ENCODE measurements at regions of chr19 and their contacts with region 1.

Region 1: GRCh38 chr19:6354098-6354674 is 7.1 kb upstream of the CLPP start:
- DNase-seq: peak; percentile 36
- ATAC-seq: no peak
- H3K4me3 ChIP-seq: no peak overlapping the region
- H3K27ac ChIP-seq: no peak overlapping the region
- H3K4me1 ChIP-seq: peaks cover 11% of the 10 kb centered on the region; the same call in 1 of the 2 replicates
- H3K27me3 ChIP-seq: no peaks in the 10 kb centered on the region
- CTCF ChIP-seq: peak; percentile 61

Region 2: GRCh38 chr19:6048808-6049405 is 305.3 kb before region 1 on chr19:
- CTCF ChIA-PET with region 1: no interaction called
- POLR2A ChIA-PET with region 1: no interaction called
- intact Hi-C with region 1: loop called (anchors 2 kb)
- DNase-seq: peak; percentile 93
- ATAC-seq: peak; percentile 98
- H3K4me3 ChIP-seq: peak overlapping the region; percentile 33
- H3K27ac ChIP-seq: no peak overlapping the region
- H3K4me1 ChIP-seq: peaks cover 9% of the 10 kb centered on the region
- H3K27me3 ChIP-seq: no peaks in the 10 kb centered on the region
- CTCF ChIP-seq: peak; percentile 91

Region 3: DNA sequence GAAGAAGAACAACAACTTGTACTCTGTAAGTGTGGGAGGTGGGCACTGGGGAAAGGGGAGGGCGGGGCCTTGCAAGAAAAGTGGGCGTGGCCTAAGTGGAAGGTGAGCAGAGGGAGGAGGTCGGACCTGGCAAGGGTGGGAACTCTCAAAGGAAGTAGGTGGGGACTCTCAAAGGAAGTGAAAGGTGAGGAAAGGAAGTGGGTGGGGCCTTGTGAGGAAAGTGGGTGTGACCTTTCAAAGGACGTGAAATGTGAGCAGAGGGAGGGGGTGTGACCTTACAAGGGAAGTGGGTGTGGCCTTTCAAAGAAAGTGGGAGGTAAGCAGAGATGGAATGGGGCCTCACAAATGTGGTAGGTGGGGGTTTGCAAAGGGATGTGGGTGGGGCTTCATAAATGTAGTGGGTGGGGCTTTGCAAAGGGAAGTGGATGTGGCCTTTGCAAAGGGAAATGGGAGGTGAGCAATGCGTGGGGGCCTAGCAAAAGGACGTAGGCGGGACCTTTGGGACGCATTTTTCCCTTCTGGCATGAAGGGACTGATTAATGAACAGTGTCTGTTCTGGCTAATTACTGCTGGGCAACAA is 192.8 kb before region 1 on chr19:
- CTCF ChIA-PET with region 1: no interaction called
- POLR2A ChIA-PET with region 1: no interaction called
- intact Hi-C with region 1: loop called (anchors 1 kb)
- DNase-seq: peak; percentile 82
- ATAC-seq: peak; percentile 50
- H3K4me3 ChIP-seq: no peak overlapping the region
- H3K27ac ChIP-seq: no peak overlapping the region
- H3K4me1 ChIP-seq: no peaks in the 10 kb centered on the region
- H3K27me3 ChIP-seq: no peaks in the 10 kb centered on the region
- CTCF ChIP-seq: no peak

Region 4: GRCh38 chr19:6218491-6219162 is 135.6 kb before region 1 on chr19:
- CTCF ChIA-PET with region 1: interaction called, 3 read pairs
- POLR2A ChIA-PET with region 1: no interaction called
- intact Hi-C with region 1: loop called (anchors 2 kb)
- DNase-seq: peak; percentile 92
- ATAC-seq: peak; percentile 85
- H3K4me3 ChIP-seq: no peak overlapping the region
- H3K27ac ChIP-seq: no peak overlapping the region
- H3K4me1 ChIP-seq: no peaks in the 10 kb centered on the region; the same call in 1 of the 2 replicates
- H3K27me3 ChIP-seq: no peaks in the 10 kb centered on the region
- CTCF ChIP-seq: peak; percentile 96

Region 5: GRCh38 chr19:6443986-6444385 is 89.8 kb after region 1 on chr19:
- CTCF ChIA-PET with region 1: no interaction called
- POLR2A ChIA-PET with region 1: no interaction called
- intact Hi-C with region 1: no loop called
- DNase-seq: no peak
- ATAC-seq: no peak
- H3K4me3 ChIP-seq: no peak overlapping the region
- H3K27ac ChIP-seq: no peak overlapping the region
- H3K4me1 ChIP-seq: no peaks in the 10 kb centered on the region
- H3K27me3 ChIP-seq: no peaks in the 10 kb centered on the region
- CTCF ChIP-seq: no peak